ENCODE measurements at regions of chr17 and their contacts with region 1.

Region 1: DNA sequence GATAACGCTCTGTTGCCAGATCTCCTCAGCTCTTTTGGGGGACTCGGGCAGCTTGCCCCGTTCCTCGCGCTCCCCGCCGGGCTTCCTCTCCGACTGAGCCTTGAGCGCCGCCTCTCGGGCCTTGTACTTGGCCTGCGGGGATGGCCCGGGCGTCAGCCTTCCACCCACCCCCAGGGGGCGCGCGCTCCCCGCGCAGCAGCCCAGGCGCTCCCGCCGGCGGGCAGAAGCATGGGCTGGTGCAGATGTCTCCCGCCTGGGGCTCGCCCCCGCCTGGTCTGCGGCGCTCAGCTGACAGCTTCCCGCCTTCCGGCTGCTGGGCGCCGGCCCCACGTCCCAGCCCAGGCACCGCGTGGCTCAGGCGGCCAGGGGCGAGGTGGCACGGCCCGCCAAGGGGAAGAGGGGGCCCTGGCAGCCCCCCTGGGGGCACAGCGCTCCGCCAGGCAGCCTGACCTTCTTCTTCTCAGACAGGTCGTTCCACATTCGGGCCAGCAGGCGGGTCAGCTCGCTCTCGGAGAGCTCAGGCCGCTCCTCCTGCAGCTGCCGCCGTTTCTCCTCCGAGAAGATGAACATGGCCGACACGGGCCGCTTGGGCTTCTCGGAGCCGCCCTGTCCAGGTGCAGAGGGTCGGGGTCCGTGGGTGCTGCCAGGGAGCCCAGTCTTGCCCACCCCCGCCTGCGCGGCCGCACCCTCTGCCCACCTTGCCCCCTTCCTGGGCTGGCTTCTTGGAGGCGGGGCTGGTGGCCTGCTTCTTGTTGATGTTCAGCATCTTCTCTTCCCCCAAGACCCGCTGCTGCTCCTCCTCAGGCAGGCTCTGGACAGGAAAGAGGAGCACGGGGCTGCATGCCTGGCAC is 8.9 kb downstream of the UBTF start:
- DNase-seq: peak; percentile 84 to 91
- ATAC-seq: peak; percentile 77 to 92
- H3K4me3 ChIP-seq: no peak overlapping the region
- H3K27ac ChIP-seq: peak overlapping the region in 1 of 2 experiments; percentile 65; a peak in 2 of 6 replicates
- H3K4me1 ChIP-seq: peaks cover 27% of the 10 kb centered on the region
- CTCF ChIP-seq: peak; percentile 99
- EP300 ChIP-seq: no peak
- POLR2A ChIP-seq: no peak
- RAD21 ChIP-seq: peak; percentile 84 to 96

Region 2: GRCh38 chr17:43861024-43861621 is 349.4 kb before region 1 on chr17:
- CTCF ChIA-PET with region 1: no interaction called
- POLR2A ChIA-PET with region 1: no interaction called
- DNase-seq: no peak
- ATAC-seq: no peak
- H3K4me3 ChIP-seq: no peak overlapping the region
- H3K27ac ChIP-seq: no peak overlapping the region; a peak in 1 of 6 replicates
- H3K4me1 ChIP-seq: peaks cover 5% of the 10 kb centered on the region; the same call in 1 of the 3 replicates
- CTCF ChIP-seq: no peak
- EP300 ChIP-seq: no peak
- POLR2A ChIP-seq: no peak
- RAD21 ChIP-seq: no peak

Region 3: GRCh38 chr17:44044067-44044466 is 166.5 kb before region 1 on chr17:
- CTCF ChIA-PET with region 1: no interaction called
- POLR2A ChIA-PET with region 1: no interaction called
- DNase-seq: no peak
- ATAC-seq: no peak
- H3K4me3 ChIP-seq: no peak overlapping the region
- H3K27ac ChIP-seq: 0 out of 6 replicates have a peak overlapping the region, but pooled peaks of 1 of the 2 experiments have one; percentile 0
- H3K4me1 ChIP-seq: peaks cover 11% of the 10 kb centered on the region
- CTCF ChIP-seq: no peak
- EP300 ChIP-seq: no peak
- POLR2A ChIP-seq: no peak
- RAD21 ChIP-seq: no peak

Region 4: GRCh38 chr17:44170499-44171201 is 39.9 kb before region 1 on chr17 and contains the start of gene ASB16:
- CTCF ChIA-PET with region 1: interaction called, 15 read pairs
- POLR2A ChIA-PET with region 1: no interaction called
- DNase-seq: no peak
- ATAC-seq: peak; percentile 9 to 11; a peak in 4 of 6 replicates
- H3K4me3 ChIP-seq: no peak within 1 kb of the TSS
- H3K27ac ChIP-seq: peak within 1 kb of the TSS in 1 of 2 experiments; percentile 1; a peak in 2 of 6 replicates
- H3K4me1 ChIP-seq: peaks cover 16% of the 10 kb centered on the region
- CTCF ChIP-seq: no peak
- EP300 ChIP-seq: no peak
- POLR2A ChIP-seq: no peak
- RAD21 ChIP-seq: no peak
- polyA plus RNA-seq, gene ASB16: 0.05 TPM in 1 of 2 replicates, not detected in the other

Region 5: GRCh38 chr17:44199553-44200477 is 10.8 kb before region 1 on chr17 and contains the start of gene ATXN7L3:
- CTCF ChIA-PET with region 1: interaction called, 68 read pairs
- POLR2A ChIA-PET with region 1: interaction called, 9 read pairs
- DNase-seq: peak; percentile 99
- ATAC-seq: peak; percentile 66 to 87
- H3K4me3 ChIP-seq: peak within 1 kb of the TSS; percentile 87
- H3K27ac ChIP-seq: peak within 1 kb of the TSS; percentile 98 to 100
- H3K4me1 ChIP-seq: peaks cover 35% of the 10 kb centered on the region
- CTCF ChIP-seq: no peak
- EP300 ChIP-seq: 0 out of 5 replicates have a peak, but pooled peaks of 1 of the 2 experiments have one; percentile 29
- POLR2A ChIP-seq: peak; percentile 40; the same call in 1 of the 2 replicates
- RAD21 ChIP-seq: no peak
- polyA plus RNA-seq, gene ATXN7L3: 65.7 and 72.7 TPM in 2 replicates

Region 6: DNA sequence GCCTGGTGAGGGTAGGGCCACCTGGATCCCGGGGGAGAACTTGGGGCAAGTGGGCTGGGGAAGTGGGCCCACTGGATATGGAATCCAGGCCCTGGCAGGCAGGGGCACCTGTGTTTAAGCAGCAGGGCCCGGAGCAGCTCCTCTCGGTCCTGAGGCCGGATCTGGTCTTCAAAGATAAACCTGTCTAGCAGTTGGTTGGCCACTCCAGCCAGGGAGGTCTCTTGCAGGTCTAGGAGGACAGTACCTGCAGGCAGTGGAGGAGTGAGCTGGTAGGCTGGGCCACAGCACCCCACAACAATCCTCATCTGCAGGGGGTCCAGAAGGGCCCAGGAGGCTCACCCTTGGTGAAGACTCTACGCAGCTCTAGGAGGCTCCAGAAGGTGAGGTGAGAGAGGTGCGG is 49.7 kb after region 1 on chr17:
- CTCF ChIA-PET with region 1: interaction called, 12 read pairs
- POLR2A ChIA-PET with region 1: no interaction called
- DNase-seq: no peak
- ATAC-seq: 0 out of 6 replicates have a peak, but pooled peaks of 1 of the 2 experiments have one; percentile 6
- H3K4me3 ChIP-seq: no peak overlapping the region
- H3K27ac ChIP-seq: no peak overlapping the region
- H3K4me1 ChIP-seq: no peaks in the 10 kb centered on the region
- CTCF ChIP-seq: no peak
- EP300 ChIP-seq: no peak
- POLR2A ChIP-seq: no peak
- RAD21 ChIP-seq: no peak

Region 7: GRCh38 chr17:44308865-44309264 is 98.3 kb after region 1 on chr17:
- CTCF ChIA-PET with region 1: interaction called, 159 read pairs
- POLR2A ChIA-PET with region 1: no interaction called
- DNase-seq: no peak
- ATAC-seq: peak in 1 of 2 experiments; percentile 4; a peak in 1 of 6 replicates
- H3K4me3 ChIP-seq: no peak overlapping the region
- H3K27ac ChIP-seq: no peak overlapping the region
- H3K4me1 ChIP-seq: peaks cover 15% of the 10 kb centered on the region
- CTCF ChIP-seq: no peak
- EP300 ChIP-seq: no peak
- POLR2A ChIP-seq: no peak
- RAD21 ChIP-seq: no peak

Region 8: GRCh38 chr17:44344939-44345453 is 134.4 kb after region 1 on chr17 and contains the start of gene GRN:
- CTCF ChIA-PET with region 1: interaction called, 246 read pairs
- POLR2A ChIA-PET with region 1: interaction called, 6 read pairs
- DNase-seq: peak; percentile 100
- ATAC-seq: peak; percentile 89 to 99
- H3K4me3 ChIP-seq: peak within 1 kb of the TSS; percentile 92
- H3K27ac ChIP-seq: peak within 1 kb of the TSS; percentile 81 to 85
- H3K4me1 ChIP-seq: peaks cover 9% of the 10 kb centered on the region
- CTCF ChIP-seq: no peak
- EP300 ChIP-seq: no peak
- POLR2A ChIP-seq: peak; percentile 73
- RAD21 ChIP-seq: no peak
- polyA plus RNA-seq, gene GRN: 111 and 147 TPM in 2 replicates

Region 9: DNA sequence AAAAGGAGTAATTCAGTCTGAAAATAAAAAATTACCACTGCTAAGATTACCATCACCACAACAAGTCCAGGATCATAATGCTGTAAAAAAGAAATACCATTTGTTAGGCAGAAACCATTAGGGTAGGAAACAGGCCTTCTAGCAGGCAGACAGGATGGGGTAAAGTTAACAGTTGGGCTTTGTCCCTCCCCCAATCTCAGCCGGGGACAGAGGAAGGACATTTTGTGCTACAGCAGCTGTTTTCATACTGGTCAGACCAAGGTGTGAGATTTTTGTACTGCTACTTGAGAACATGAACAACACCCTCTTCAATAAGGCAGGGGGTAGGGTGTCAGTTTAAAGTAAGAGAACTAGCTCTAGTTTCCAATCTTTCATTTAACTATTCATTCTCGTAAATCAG is 228.1 kb after region 1 on chr17:
- CTCF ChIA-PET with region 1: no interaction called
- POLR2A ChIA-PET with region 1: no interaction called
- DNase-seq: no peak
- ATAC-seq: no peak
- H3K4me3 ChIP-seq: no peak overlapping the region
- H3K27ac ChIP-seq: peak overlapping the region in 1 of 2 experiments; percentile 17; a peak in 1 of 6 replicates
- H3K4me1 ChIP-seq: peaks cover 7% of the 10 kb centered on the region; the same call in 2 of the 3 replicates
- CTCF ChIP-seq: no peak
- EP300 ChIP-seq: no peak
- POLR2A ChIP-seq: no peak
- RAD21 ChIP-seq: no peak

Region 10: GRCh38 chr17:44636562-44636961 is 426.0 kb after region 1 on chr17:
- CTCF ChIA-PET with region 1: interaction called, 10 read pairs
- POLR2A ChIA-PET with region 1: no interaction called
- DNase-seq: peak; percentile 67 to 69
- ATAC-seq: peak; percentile 88 to 94
- H3K4me3 ChIP-seq: no peak overlapping the region
- H3K27ac ChIP-seq: peak overlapping the region in 1 of 2 experiments; percentile 1; a peak in 1 of 6 replicates
- H3K4me1 ChIP-seq: peaks cover 22% of the 10 kb centered on the region
- CTCF ChIP-seq: peak; percentile 97
- EP300 ChIP-seq: no peak
- POLR2A ChIP-seq: no peak
- RAD21 ChIP-seq: peak; percentile 99